ENCODE measurements at regions of chr17 and their contacts with region 1.

Region 1: GRCh38 chr17:68771867-68772515 is 170.8 kb upstream of the FAM20A start:
- DNase-seq: no peak

Region 2: DNA sequence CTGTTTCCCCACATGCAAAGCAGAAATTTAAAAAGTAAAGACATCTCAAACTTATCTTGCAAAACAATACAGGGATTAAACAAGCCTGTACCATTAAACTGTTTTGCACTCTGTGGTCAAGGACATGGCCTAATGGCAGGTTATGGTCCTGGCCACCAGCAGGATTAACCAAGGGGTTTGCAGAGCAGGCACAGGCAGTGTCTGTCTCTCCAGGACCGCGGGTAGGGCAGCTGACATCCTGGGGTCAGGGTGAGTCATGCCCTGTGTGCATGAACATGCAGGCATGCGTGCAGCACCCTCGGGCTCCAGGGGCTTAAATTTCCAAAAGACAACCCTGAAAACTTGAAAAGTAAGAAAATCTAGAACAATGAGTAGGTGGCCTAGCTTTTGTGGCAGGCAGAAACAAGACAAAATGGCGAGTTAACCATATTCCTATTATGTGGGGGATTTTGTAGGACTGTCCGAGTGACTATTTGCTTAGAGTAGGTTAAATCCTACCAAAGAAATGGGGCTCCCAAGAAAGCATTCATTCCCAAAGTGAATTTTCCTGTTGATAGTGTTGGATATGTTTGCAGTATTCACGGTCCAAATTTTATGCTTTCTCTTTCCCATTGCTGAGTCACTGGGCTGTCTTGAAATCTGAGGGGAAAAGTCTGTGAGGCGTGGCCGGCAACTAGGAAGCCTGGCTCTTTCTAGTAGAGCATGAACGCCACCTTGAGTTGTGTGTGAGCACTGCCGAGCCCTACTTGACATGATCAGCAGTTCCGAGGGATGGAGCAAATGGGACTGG is 12.5 kb before region 1 on chr17:
- intact Hi-C with region 1: loop called in 1 of 2 experiments (anchors 2 kb)
- DNase-seq: peak; percentile 94

Region 3: DNA sequence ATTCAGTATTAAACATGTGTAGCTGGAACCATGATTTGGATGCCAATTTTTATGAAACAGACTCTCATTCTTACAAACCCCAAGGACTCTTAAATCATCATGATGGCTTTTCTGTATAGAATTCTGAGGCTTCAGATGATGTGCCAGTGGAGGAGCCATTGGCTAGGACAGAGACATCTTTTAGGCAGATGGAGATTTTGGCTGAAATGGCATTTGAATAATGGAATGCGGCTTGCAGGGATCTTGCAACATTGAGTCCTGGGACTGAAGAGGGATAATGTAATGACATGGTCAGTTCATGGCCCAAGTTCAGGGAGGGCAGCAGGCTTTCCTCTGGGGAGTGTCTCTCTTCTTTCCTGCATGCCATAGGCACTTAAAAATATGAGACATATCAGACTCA is 10.8 kb after region 1 on chr17:
- intact Hi-C with region 1: no loop called
- DNase-seq: no peak

Region 4: GRCh38 chr17:68812876-68813584 is 41.0 kb after region 1 on chr17:
- intact Hi-C with region 1: no loop called
- DNase-seq: no peak

Region 5: DNA sequence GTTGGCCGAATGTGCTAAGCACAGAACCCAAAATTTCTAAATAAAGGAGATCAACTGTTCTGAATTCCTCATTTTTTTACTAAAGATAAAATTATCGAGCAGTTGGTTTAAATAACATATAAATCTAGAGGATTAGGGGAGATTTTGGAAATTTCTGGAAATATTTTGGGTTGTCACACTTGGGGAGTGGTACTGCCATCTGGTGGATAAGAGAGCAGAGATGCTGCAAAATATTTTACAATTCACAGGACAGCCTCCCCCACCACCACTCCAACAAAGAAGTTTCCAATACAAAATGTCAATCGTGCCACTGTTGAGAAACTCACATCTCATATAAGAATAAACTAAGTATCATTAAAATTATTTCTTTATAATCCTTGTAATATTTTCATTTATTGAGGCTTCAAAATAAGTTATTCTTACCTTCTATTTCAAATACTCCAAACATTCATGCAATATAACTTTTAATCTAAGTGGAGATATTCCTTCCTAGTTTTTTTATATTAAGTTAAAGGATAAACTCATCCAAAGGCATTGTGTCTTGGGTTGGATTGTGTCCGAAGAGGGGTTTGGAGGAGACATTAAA is 200.2 kb after region 1 on chr17:
- intact Hi-C with region 1: loop called (anchors 5 kb)
- DNase-seq: no peak

Region 6: DNA sequence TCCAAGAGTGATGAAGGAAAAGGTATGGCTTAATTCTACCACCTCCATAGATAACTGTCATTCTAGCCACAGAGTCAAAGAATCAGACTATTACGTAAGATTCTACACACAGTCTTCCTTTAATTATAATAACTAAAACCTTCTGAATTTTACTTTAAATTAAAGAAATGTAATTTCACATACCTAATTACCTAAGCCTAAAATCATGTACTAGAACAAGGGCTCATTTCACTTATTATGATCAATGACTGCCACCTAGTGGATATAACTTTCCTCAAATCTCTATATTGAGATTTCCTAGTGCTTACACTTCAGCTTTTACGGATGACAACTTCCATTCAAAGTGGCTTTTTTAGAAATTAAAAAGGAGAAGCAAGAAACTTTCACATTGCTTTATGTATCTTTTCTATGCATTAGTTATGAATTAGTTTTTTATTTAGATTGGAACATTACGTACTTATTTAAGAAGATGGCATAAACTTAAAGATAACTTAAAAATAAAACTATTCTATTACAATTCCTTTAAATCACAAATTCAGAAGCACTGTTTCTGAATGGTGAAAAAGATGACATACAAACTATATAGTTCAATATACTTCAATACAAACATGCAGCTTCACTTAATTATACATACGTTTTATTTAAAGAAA is 474.9 kb after region 1 on chr17:
- intact Hi-C with region 1: loop called in 1 of 2 experiments (anchors 10 kb)
- DNase-seq: no peak

Measured in posterior vena cava (tissue), 2 donors.